Panc1 (cell line): ENCODE measurements at regions of chr10 and their contacts with region 1.

Region 1: DNA sequence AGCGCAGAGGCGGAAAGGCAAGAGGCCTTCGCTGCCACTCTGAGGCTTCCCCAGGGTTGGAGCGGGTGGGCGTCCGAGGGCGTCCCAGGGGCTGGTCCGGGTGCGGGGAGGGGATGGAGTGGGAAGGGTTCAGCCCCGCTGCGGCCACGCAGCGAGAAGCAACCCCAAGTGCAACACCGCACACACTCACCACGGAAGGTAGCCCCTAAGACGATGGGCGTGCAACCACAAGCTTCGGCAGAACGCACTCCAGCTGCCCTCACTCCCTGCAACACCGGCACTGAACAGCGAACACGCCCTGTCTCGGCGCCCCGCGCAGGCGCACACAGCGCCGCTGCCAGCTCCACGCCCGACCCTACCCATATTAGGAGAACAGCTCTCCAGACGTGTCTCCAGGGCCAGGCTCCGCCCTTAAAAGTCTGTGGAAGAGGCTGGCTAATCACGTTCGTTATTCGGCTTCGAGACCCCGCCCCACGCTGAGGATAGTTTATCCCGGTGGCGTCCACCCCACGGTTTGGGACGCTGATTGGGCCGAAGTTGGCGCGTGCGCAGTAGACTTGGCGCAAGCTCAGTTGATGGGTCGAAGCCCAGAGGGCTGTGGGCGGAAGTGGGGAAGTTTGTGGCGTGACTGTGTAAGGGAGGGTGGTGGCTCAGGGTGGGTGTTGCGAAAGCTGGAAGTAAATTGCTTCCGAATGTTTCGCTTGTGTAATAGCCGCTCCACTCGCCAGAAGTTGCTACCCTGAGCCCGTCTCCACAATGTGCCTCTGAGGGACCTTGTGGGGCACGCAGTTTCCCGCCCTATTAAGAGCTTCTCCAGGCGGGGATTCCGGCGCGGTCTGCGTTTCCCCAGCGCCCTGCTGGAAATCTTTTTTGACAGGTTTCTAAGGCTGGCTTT is at the start of gene RSU1:
- DNase-seq: peak; percentile 98
- ATAC-seq: peak; percentile 98
- H3K4me3 ChIP-seq: peak within 1 kb of the TSS; percentile 86 to 92
- H3K27ac ChIP-seq: peak within 1 kb of the TSS; percentile 85
- H3K4me1 ChIP-seq: peaks cover 10% of the 10 kb centered on the region; the same call in 1 of the 2 replicates
- H3K27me3 ChIP-seq: no peaks in the 10 kb centered on the region
- CTCF ChIP-seq: no peak
- total RNA-seq, gene RSU1: 55.6 TPM

Region 2: GRCh38 chr10:16954280-16955030 is 137.1 kb after region 1 on chr10:
- CTCF ChIA-PET with region 1: no interaction called
- POLR2A ChIA-PET with region 1: interaction called, 22 read pairs
- in situ Hi-C with region 1: no loop called
- intact Hi-C with region 1: no loop called
- DNase-seq: no peak
- ATAC-seq: peak; percentile 66
- H3K4me3 ChIP-seq: no peak overlapping the region
- H3K27ac ChIP-seq: peak overlapping the region; percentile 78
- H3K4me1 ChIP-seq: peaks cover 3% of the 10 kb centered on the region; the same call in 1 of the 2 replicates
- H3K27me3 ChIP-seq: no peaks in the 10 kb centered on the region
- CTCF ChIP-seq: no peak